A549 (cell line): ENCODE measurements at regions of chr6 and their contacts with region 1.

Region 1: DNA sequence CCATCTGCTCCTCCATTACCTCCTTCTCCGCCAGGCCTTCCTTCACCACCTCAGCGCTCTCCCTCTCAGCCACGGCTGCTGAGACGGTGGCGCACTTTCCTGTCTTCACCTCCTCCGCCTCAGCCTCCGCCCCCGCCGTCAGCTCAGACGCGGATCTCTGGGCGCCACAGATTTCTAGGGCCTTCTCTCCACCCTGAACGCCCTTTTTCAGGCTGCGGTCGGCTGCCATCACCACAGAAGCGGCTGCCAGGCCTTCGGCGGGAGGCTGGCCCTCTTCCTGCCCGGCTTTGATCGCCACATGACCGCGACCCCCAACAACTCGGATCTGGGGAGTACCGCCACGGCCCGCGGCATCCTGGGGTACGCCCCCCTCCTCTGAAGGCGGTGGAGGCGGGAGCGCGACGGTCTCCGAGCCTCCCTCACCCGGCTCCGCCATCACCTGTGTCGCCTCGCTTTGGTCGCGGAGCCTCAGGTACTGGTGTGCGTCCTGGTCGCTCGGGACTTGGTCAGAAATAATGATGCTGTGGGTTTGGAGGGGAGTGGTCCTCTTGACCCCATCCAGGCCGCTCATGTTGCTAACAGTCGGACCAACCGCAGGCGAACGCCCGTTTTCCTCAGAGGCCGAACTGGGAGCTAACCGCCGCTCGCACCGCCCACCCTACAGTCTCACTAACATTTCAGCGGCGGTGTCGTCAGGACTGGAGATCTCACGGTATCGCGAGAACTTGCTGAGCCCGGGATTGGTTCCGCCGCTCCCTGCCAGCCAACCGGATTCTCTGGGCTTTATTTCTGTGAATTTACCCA is at the start of gene TSPYL1:
- DNase-seq: peak; percentile 79 to 94
- ATAC-seq: peak; percentile 98
- H3K4me3 ChIP-seq: peak within 1 kb of the TSS; percentile 100
- H3K27ac ChIP-seq: peak within 1 kb of the TSS; percentile 94 to 97
- H3K4me1 ChIP-seq: peaks cover 36% of the 10 kb centered on the region
- CTCF ChIP-seq: no peak
- EP300 ChIP-seq: no peak
- POLR2A ChIP-seq: peak; percentile 71
- RAD21 ChIP-seq: no peak
- polyA plus RNA-seq, gene TSPYL1: 31.6 and 32.5 TPM in 2 replicates

Region 2: DNA sequence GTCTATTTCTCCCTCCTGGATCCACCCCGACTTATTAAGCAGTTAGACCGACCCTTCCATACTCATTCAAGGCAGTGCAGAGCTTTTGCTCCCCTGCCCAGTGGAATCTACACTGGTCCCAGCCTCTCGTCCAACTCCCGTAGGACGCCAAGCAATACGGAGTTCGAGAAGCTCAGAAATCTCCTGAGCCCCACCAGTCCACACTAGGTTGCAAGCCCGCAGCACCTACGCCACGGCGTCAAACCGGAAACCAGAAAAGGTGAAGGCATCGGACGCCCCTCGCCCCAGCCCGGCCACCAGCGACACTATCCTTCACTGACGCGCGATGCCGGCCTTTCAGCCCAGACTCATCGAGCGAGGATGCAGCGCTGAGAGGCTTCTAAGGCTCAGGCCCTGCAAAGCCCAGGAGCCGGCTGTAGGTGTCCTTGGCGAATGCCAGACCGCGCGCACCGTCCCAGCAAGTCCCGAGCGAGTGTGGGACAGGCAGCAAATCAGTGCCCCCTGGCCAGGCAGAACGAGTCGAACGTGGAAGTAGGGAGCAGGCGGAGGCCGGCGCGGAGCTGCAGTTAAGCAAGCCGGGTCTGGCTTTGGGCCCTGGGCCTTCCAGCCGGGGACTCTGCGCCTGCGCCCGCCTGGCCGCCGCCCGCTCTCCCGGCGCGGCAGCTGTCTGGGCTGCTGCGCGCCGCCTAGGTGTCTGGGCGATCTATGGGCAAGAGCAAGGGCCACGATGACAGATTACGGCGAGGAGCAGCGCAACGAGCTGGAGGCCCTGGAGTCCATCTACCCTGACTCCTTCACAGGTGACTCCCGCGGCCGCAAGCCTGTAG is 291.6 kb after region 1 on chr6 and contains the start of gene RWDD1:
- CTCF ChIA-PET with region 1: interaction called, 80 read pairs
- POLR2A ChIA-PET with region 1: interaction called, 11 read pairs
- DNase-seq: peak; percentile 87 to 99
- ATAC-seq: peak; percentile 98 to 99
- H3K4me3 ChIP-seq: peak within 1 kb of the TSS; percentile 89
- H3K27ac ChIP-seq: peak within 1 kb of the TSS; percentile 90 to 96
- H3K4me1 ChIP-seq: peaks cover 19% of the 10 kb centered on the region; the same call in 2 of the 3 replicates
- CTCF ChIP-seq: no peak
- EP300 ChIP-seq: no peak
- POLR2A ChIP-seq: peak; percentile 76
- RAD21 ChIP-seq: no peak
- polyA plus RNA-seq, gene RWDD1: 33.2 and 47.7 TPM in 2 replicates

Region 3: DNA sequence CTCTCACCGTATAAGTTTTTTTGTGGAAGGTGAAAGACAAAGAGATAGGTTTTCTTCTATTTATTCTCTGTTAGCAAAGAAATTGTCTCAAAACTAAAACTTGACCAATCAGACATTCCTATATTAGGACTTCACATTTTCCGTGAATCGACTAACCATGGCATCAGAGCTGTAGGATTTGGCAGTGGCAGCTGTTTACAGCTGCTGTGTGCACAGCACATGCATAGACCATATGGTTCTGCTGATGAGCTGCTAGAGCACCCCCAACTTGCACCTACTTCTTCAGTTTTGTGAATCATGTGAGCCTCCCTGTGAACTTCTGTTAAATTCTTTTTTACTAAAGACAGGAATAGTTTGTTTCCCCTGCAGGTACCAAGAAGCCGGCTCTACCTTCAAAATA is 755.5 kb after region 1 on chr6:
- CTCF ChIA-PET with region 1: no interaction called
- POLR2A ChIA-PET with region 1: no interaction called
- DNase-seq: no peak
- ATAC-seq: no peak
- H3K4me3 ChIP-seq: no peak overlapping the region
- H3K27ac ChIP-seq: no peak overlapping the region
- H3K4me1 ChIP-seq: no peaks in the 10 kb centered on the region
- CTCF ChIP-seq: no peak
- EP300 ChIP-seq: no peak
- POLR2A ChIP-seq: no peak
- RAD21 ChIP-seq: no peak